PC-3 (cell line): ENCODE measurements at regions of chr2 and their contacts with region 1.

Region 1: DNA sequence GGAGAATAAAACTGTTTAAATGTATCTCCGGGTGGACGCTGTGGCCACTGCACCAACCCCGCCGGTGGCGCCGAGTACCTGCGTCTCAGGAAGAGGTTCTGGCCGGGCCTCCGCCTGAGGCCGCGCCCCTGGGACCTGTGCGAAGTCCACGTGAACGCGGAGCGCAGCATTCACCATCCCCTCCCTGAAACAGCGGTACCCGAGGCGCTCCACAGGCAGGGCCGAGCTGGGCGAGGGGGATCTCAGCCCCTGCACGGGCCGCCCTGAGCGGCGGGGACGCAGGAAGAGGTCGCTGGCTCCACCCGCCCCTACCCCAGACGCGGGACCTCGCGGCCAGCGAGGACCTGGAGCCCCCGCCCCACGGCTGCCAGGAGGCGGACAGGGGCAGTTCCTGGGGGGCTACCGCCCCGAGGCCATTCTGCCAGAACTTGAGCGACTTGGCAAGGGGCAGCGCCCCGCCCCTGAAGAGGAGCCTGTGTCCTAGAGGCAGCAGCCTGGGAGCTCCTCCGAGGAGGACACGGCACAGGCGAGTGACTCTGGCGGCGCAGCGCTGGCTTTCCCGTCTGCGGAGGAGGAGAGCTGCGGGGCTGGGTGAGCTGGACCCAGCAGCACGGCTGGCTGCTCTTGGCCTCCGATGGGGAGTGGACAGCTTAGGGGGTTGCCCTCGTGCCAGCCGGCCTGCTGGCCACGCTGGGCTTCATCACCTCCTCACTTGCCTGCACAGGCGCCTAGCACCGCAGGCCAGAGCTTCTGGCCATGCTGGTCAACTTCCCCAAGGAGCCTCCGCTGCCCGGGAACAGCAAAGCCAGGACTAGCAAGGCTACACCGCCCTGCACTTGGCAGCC is 9.7 kb upstream of the TEKT4 start:
- DNase-seq: no peak
- ATAC-seq: peak; percentile 55
- H3K4me3 ChIP-seq: peak overlapping the region; percentile 52
- H3K27ac ChIP-seq: no peak overlapping the region
- H3K4me1 ChIP-seq: no peaks in the 10 kb centered on the region
- H3K27me3 ChIP-seq: peaks cover 55% of the 10 kb centered on the region
- CTCF ChIP-seq: no peak

Region 2: GRCh38 chr2:94956797-94957391 is 95.4 kb after region 1 on chr2:
- CTCF ChIA-PET with region 1: no interaction called
- POLR2A ChIA-PET with region 1: no interaction called
- intact Hi-C with region 1: loop called (anchors 2 kb)
- DNase-seq: peak; percentile 70
- ATAC-seq: peak; percentile 76
- H3K4me3 ChIP-seq: no peak overlapping the region
- H3K27ac ChIP-seq: no peak overlapping the region
- H3K4me1 ChIP-seq: peaks cover 15% of the 10 kb centered on the region
- H3K27me3 ChIP-seq: peaks cover 34% of the 10 kb centered on the region
- CTCF ChIP-seq: peak; percentile 91

Region 3: DNA sequence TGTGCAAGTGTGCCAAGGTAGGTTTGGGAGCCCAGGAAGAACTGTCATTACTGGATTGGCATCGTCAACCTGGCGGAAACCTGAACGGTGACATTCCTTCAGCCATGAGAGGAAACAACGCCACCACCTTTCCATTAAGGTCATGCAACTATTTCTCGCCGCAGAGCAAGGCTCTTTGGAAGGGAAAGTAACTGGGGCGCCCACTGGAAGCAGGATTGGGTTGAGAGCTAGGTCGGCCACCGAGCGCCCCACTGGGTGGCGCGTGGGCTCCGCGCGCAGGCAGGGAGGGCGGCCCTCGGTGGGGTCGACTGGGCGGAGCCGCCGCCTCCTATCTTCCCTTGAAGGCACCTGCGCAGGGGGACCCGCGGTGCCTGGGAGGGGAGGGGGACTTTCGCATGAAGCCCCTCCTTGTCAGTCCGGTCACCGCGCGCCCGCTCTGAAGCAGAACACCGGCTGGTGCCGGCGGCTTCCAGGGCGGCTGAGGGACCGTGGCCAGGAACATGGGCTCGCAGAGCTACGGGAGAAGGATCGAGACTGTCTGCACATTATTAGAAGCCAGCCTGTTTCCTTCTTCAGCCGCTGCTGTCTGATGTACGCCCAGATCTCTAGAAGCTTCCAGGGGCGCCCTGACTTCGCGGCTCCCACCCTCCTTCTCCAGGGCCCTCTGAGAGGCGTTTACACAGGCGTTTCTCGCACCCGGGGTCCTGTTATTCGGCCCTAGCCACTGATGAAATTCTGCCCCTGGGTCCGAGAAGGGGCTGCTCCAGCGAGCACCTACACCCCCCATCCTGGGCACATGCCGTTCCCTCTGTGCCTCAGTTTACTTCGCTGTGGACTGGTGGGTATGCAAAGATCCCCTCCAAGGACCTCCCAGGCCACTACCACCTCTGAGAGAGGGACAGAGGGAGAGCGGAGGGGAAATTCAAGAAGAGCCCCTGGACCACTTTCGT is 136.7 kb after region 1 on chr2:
- CTCF ChIA-PET with region 1: no interaction called
- POLR2A ChIA-PET with region 1: no interaction called
- intact Hi-C with region 1: no loop called
- DNase-seq: no peak
- ATAC-seq: no peak
- H3K4me3 ChIP-seq: no peak overlapping the region
- H3K27ac ChIP-seq: no peak overlapping the region
- H3K4me1 ChIP-seq: no peaks in the 10 kb centered on the region
- H3K27me3 ChIP-seq: peaks cover 28% of the 10 kb centered on the region
- CTCF ChIP-seq: no peak